ENCODE measurements at regions of chr3 and their contacts with region 1.

Region 1: DNA sequence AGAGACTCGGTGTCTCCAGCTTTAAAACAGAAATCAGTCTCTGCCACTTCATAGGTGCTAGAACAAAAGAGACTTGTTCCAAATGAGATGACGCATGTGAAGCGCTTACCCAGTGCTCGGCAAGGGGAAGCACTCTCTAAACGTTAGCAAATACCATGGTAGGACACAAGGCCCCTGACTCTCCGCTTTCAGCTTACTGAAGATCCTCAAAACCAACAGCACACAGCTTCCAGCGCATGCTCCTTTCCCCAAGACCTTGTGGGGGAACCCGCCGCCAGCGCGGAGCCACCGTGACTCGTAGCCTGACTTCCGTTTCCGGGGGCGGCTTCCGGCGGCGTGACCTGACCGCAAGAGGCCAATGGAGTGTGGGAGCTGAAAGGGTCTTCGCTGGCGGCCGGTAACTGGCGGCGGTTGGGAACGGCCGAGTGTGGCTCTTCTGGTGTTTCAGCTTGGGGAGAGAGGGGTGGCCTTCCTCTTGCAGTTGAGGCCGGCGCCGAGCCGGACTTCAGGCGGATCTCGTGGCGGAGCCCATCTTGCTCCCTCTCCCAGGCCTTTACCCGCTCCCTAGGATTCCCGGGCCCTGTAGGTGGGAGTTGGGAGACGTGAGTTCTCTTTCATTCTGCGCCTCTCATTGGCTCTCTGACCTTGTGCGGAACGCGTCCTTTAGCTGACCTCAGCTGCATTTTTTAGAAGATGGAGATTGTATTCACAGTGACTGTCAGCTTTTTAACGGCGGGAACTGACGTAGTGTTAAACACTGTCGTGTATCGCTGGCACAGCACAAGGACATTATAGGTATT is at the start of gene THUMPD3:
- DNase-seq: peak; percentile 96
- ATAC-seq: peak; percentile 96
- H3K4me3 Mint-ChIP-seq: peak within 1 kb of the TSS; percentile 88
- H3K27ac Mint-ChIP-seq: peak within 1 kb of the TSS; percentile 98
- H3K4me1 Mint-ChIP-seq: peaks cover 39% of the 10 kb centered on the region
- H3K27me3 Mint-ChIP-seq: no peaks in the 10 kb centered on the region
- total RNA-seq, gene THUMPD3: 46.1 to 52.0 TPM

Region 2: GRCh38 chr3:9396700-9397521 is 34.0 kb after region 1 on chr3:
- CTCF ChIA-PET with region 1: interaction called, 12 read pairs
- DNase-seq: peak; percentile 99
- ATAC-seq: peak; percentile 78
- H3K4me3 Mint-ChIP-seq: peak overlapping the region; percentile 97
- H3K27ac Mint-ChIP-seq: peak overlapping the region; percentile 98
- H3K4me1 Mint-ChIP-seq: peaks cover 63% of the 10 kb centered on the region
- H3K27me3 Mint-ChIP-seq: no peaks in the 10 kb centered on the region

Region 3: GRCh38 chr3:9452417-9452816 is 89.5 kb after region 1 on chr3:
- CTCF ChIA-PET with region 1: interaction called, 12 read pairs
- DNase-seq: no peak
- ATAC-seq: peak; percentile 83
- H3K4me3 Mint-ChIP-seq: peak overlapping the region; percentile 51
- H3K27ac Mint-ChIP-seq: peak overlapping the region; percentile 91
- H3K4me1 Mint-ChIP-seq: peaks cover 37% of the 10 kb centered on the region
- H3K27me3 Mint-ChIP-seq: no peaks in the 10 kb centered on the region

Measured in activated CD8-positive, alpha-beta memory T cell treated with anti-CD3 and anti-CD28 coated beads, Interleukin-2, amount 10 ng/mL, durations not matched to agents 7 days and 5 days (primary cell).